Natural killer cell (primary cell): ENCODE measurements at regions of chr3 and their contacts with region 1.

Region 1: GRCh38 chr3:136734382-136735070 is 17.7 kb downstream of the STAG1 start:
- DNase-seq: peak in 1 of 2 donors; percentile 56
- ATAC-seq: peak in 2 of 3 donors; percentile 73 to 77
- H3K4me3 ChIP-seq: no peak overlapping the region
- H3K4me3 Mint-ChIP-seq: peak overlapping the region; percentile 40
- H3K27ac ChIP-seq: no peak overlapping the region
- H3K27ac Mint-ChIP-seq: peak overlapping the region; percentile 66 to 76
- H3K4me1 ChIP-seq: peaks cover 17% of the 10 kb centered on the region
- H3K4me1 Mint-ChIP-seq: peaks cover 39 to 47% of the 10 kb centered on the region in 2 donors
- H3K27me3 ChIP-seq: no peaks in the 10 kb centered on the region
- H3K27me3 Mint-ChIP-seq: no peaks in the 10 kb centered on the region
- CTCF ChIP-seq: peak; percentile 40

Region 2: GRCh38 chr3:136694321-136694720 is 40.2 kb before region 1 on chr3:
- intact Hi-C with region 1: loop called (anchors 5 kb)
- DNase-seq: peak; percentile 26 to 58
- ATAC-seq: peak; percentile 81 to 90 (median 86)
- H3K4me3 ChIP-seq: no peak overlapping the region
- H3K4me3 Mint-ChIP-seq: peak overlapping the region; percentile 92
- H3K27ac ChIP-seq: peak overlapping the region; percentile 86
- H3K27ac Mint-ChIP-seq: peak overlapping the region; percentile 89 to 94
- H3K4me1 ChIP-seq: peaks cover 45% of the 10 kb centered on the region
- H3K4me1 Mint-ChIP-seq: peaks cover 90 to 93% of the 10 kb centered on the region in 2 donors
- H3K27me3 ChIP-seq: no peaks in the 10 kb centered on the region
- H3K27me3 Mint-ChIP-seq: no peaks in the 10 kb centered on the region
- CTCF ChIP-seq: no peak